Naive thymus-derived CD4-positive, alpha-beta T cell (primary cell): ENCODE measurements at regions of chr10 and their contacts with region 1.

Region 1: DNA sequence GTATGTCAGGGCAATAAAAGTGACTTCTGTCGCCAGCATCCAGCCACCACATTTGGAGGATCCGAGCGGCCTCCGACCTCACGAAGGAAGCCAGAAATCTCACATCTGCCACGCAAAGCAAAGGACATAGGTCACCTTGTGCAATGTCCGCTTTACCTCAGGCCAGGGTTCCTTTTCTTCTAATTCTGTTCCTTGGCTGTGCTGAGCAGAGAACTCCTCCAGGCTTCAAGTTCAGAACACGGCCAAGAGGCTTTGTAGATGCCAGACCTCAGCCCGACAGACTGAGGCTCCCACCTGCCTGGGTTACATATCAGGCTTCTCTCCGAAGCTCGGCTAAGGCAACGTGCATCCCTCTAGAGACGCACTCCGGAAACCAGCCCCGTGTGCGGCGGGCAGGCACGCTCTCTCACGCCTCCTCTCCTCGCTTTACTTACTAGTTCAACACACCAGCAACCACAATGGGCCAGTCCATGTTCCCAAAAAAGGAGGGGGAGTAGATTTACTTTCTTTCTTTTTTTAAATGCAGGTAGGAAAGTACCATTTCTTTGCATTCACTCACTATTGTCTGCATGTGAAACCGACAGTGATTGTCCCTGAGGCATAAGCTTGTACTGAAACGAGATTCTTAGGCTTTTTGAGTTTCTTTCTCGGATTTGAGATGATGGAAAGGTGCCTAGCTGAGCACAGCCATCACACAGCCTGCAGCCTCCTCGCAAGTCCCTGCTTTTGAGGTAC is 122.4 kb upstream of the AFAP1L2 start:
- DNase-seq: peak; percentile 64 to 97 (median 95)
- ATAC-seq: peak; percentile 94
- H3K4me3 ChIP-seq: peak overlapping the region; percentile 85
- H3K4me3 Mint-ChIP-seq: peak overlapping the region; percentile 88 to 100 (median 98)
- H3K27ac ChIP-seq: peak overlapping the region; percentile 94
- H3K27ac Mint-ChIP-seq: peak overlapping the region; percentile 92 to 100 (median 98)
- H3K4me1 ChIP-seq: peaks cover 35 to 45% of the 10 kb centered on the region in 2 donors
- H3K4me1 Mint-ChIP-seq: peaks cover 34 to 64% (median 53%) of the 10 kb centered on the region in 7 donors
- H3K27me3 ChIP-seq: no peaks in the 10 kb centered on the region
- H3K27me3 Mint-ChIP-seq: peaks cover 0 to 4% (median 0%) of the 10 kb centered on the region in 5 donors

Region 2: DNA sequence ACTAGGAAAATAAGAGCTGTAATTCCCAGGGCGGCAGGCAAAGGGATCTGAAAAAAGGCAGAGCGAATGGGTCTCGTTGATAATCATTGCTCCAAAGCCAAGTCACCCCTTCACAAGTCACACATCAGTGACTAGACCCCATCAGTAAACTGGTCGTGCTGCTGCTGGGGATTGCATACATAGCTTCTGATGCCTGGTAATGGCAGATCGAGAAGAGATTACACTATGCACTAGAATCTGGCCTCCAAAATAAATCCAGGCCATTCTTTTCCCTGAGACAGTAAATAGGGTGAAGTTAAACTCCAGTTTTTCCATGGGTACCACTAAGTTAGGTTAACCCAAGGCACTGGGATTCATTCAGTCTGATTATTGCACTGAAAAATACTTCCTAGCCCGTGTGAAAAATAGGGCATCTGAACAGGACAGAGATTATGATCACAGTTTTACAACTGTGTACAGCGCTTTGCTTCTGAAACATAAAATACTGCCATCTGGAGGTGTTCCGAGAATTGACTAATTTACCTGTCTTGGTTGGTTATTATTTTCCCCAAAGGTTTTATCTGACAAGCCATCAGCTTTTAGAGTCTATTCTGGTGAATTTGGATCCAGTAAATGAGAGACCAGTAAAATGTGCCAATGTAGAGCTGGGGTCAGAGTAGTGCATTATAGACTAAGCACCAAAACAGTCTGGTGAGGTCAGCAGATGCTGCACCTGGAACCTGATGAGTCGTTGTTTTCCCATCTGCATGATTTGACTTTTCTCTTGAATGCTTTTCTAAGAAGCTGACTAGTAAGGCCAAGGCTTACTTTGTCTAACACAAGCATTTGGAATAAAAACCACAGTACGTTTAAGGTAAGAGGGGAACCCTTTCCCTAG is 39.5 kb before region 1 on chr10:
- CTCF ChIA-PET with region 1: interaction called, 3 read pairs
- POLR2A ChIA-PET with region 1: interaction called, 27 read pairs
- intact Hi-C with region 1: loop called in 1 of 2 experiments (anchors 1 kb)
- DNase-seq: no peak
- ATAC-seq: no peak
- H3K4me3 ChIP-seq: no peak overlapping the region
- H3K4me3 Mint-ChIP-seq: no peak overlapping the region
- H3K27ac ChIP-seq: peak overlapping the region; percentile 17
- H3K27ac Mint-ChIP-seq: peak overlapping the region in 8 of 9 donors; percentile 10 to 82 (median 70)
- H3K4me1 ChIP-seq: peaks cover under 1 to 17% of the 10 kb centered on the region in 2 donors
- H3K4me1 Mint-ChIP-seq: peaks cover 14 to 90% (median 78%) of the 10 kb centered on the region in 7 donors
- H3K27me3 ChIP-seq: no peaks in the 10 kb centered on the region
- H3K27me3 Mint-ChIP-seq: no peaks in the 10 kb centered on the region

Region 3: GRCh38 chr10:114499630-114500190 is 27.0 kb before region 1 on chr10:
- CTCF ChIA-PET with region 1: interaction called, 7 read pairs
- POLR2A ChIA-PET with region 1: interaction called, 189 read pairs
- intact Hi-C with region 1: loop called (anchors 1 kb)
- DNase-seq: peak in 8 of 9 donors; percentile 53 to 73 (median 67)
- ATAC-seq: peak; percentile 66
- H3K4me3 ChIP-seq: peak overlapping the region; percentile 2
- H3K4me3 Mint-ChIP-seq: peak overlapping the region; percentile 69 to 79 (median 74)
- H3K27ac ChIP-seq: peak overlapping the region; percentile 78
- H3K27ac Mint-ChIP-seq: peak overlapping the region; percentile 74 to 96 (median 93)
- H3K4me1 ChIP-seq: peaks cover 12 to 81% of the 10 kb centered on the region in 2 donors
- H3K4me1 Mint-ChIP-seq: peaks cover 57 to 100% (median 93%) of the 10 kb centered on the region in 7 donors
- H3K27me3 ChIP-seq: no peaks in the 10 kb centered on the region
- H3K27me3 Mint-ChIP-seq: no peaks in the 10 kb centered on the region

Region 4: DNA sequence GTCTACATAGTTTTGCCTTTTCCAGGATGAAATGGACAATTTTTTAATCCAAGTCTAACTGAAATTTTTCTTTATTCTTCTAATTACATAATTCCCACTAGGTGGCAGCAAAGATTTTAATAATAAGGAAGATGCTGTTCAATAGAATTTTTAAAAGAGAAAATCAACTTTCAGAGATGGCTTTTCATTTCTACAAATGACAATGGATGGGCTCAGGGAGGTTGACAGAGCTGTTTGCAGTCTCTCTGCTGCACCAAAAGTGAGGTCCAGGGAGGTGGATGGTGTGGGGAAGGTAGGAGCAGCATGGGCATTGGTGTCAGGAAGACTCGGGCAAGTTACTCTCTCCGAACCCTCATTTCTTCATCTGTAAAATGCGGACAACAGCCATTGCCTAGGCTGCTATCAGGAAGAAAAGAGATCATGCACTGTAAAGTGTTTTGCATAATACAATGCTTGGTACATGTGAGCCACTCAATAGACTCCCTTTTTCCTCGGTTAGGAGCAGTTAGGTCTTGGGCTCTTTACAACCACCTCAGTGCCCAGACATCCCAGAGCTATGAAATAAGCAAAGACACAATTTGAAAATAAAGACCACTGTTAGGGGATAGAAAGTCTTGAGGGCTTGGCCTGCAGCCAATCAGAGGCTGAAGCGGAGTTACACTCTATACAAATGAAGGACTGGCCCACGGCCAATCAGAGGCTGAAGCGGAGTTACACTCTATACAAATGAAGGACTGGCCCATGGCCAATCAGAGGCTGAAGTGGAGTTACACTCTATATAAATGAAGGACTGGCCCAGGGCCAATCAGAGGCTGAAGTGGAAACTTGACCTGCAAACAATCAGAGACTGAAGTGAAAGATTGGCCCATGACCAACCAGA is 24.3 kb after region 1 on chr10:
- CTCF ChIA-PET with region 1: interaction called, 283 read pairs
- POLR2A ChIA-PET with region 1: interaction called, 355 read pairs
- intact Hi-C with region 1: no loop called
- DNase-seq: peak in 5 of 9 donors; percentile 33 to 50 (median 40)
- ATAC-seq: peak; percentile 26
- H3K4me3 ChIP-seq: no peak overlapping the region
- H3K4me3 Mint-ChIP-seq: no peak overlapping the region
- H3K27ac ChIP-seq: no peak overlapping the region
- H3K27ac Mint-ChIP-seq: peak overlapping the region in 5 of 9 donors; percentile 1 to 61 (median 20)
- H3K4me1 ChIP-seq: peaks cover 6 to 29% of the 10 kb centered on the region in 2 donors
- H3K4me1 Mint-ChIP-seq: peaks cover 16 to 37% (median 33%) of the 10 kb centered on the region in 7 donors
- H3K27me3 ChIP-seq: no peaks in the 10 kb centered on the region
- H3K27me3 Mint-ChIP-seq: peaks cover 0 to 5% (median 0%) of the 10 kb centered on the region in 5 donors

Region 5: GRCh38 chr10:114905450-114905849 is 378.8 kb after region 1 on chr10:
- CTCF ChIA-PET with region 1: no interaction called
- POLR2A ChIA-PET with region 1: no interaction called
- intact Hi-C with region 1: no loop called
- DNase-seq: no peak
- ATAC-seq: no peak
- H3K4me3 ChIP-seq: no peak overlapping the region
- H3K4me3 Mint-ChIP-seq: no peak overlapping the region
- H3K27ac ChIP-seq: no peak overlapping the region
- H3K27ac Mint-ChIP-seq: no peak overlapping the region
- H3K4me1 ChIP-seq: no peaks in the 10 kb centered on the region
- H3K4me1 Mint-ChIP-seq: no peaks in the 10 kb centered on the region
- H3K27me3 ChIP-seq: no peaks in the 10 kb centered on the region
- H3K27me3 Mint-ChIP-seq: peaks cover 8 to 35% (median 16%) of the 10 kb centered on the region in 5 donors